ENCODE measurements at regions of chr10 and their contacts with region 1.

Region 1: GRCh38 chr10:79243181-79244067 is 103.8 kb upstream of the PPIF start:
- DNase-seq: peak; percentile 33 to 79
- ATAC-seq: peak; percentile 55 to 73 (median 67)
- H3K4me3 ChIP-seq: peak overlapping the region; percentile 29
- H3K4me3 Mint-ChIP-seq: peak overlapping the region; percentile 87
- H3K27ac ChIP-seq: peak overlapping the region; percentile 73
- H3K27ac Mint-ChIP-seq: peak overlapping the region; percentile 85
- H3K4me1 ChIP-seq: peaks cover 74% of the 10 kb centered on the region
- H3K4me1 Mint-ChIP-seq: peaks cover 59 to 72% of the 10 kb centered on the region in 2 donors
- H3K27me3 ChIP-seq: no peaks in the 10 kb centered on the region
- H3K27me3 Mint-ChIP-seq: no peaks in the 10 kb centered on the region
- CTCF ChIP-seq: no peak

Region 2: GRCh38 chr10:78559661-78560340 is 683.6 kb before region 1 on chr10:
- intact Hi-C with region 1: no loop called
- DNase-seq: no peak
- ATAC-seq: no peak
- H3K4me3 ChIP-seq: no peak overlapping the region
- H3K4me3 Mint-ChIP-seq: no peak overlapping the region
- H3K27ac ChIP-seq: no peak overlapping the region
- H3K27ac Mint-ChIP-seq: no peak overlapping the region
- H3K4me1 ChIP-seq: no peaks in the 10 kb centered on the region
- H3K4me1 Mint-ChIP-seq: no peaks in the 10 kb centered on the region
- H3K27me3 ChIP-seq: no peaks in the 10 kb centered on the region
- H3K27me3 Mint-ChIP-seq: peaks cover 6 to 15% of the 10 kb centered on the region in 2 donors
- CTCF ChIP-seq: no peak

Region 3: DNA sequence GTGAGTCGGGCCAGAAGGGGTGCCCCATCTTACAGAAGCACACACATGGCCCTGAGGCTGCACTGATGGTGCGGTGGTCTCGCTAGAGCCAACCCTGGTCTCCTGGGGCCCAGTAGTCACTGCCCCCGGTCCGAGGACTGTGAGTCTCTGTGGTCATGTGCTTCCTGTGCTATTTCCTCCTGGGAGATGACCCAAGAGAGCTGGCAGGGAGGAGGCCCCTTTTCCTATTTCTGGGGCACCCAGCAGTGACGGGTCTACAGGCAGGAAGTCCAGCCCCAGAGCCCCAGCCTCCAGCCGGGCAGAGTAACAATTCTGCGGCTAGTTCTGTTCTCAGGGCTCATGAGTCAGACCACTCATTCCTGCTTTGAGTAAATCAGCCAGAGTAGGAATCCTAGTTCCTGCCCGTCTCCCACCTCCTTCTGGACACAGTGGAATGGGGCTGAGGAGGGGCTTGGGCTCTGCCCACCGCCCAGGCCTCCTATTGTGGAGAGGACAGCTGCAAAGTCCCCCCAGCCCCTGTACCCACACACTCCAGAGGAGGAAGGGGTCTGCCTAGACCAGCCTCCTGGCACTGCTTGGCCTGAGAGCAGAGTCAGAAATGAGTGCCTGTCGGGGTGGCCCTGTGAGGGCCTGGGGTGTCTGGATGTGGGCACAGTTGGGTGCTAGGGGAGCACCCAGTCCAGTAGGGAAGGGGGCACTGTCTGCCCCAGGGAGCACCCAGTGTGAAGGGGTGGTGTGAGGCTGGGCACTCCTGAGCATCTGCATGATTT is 23.3 kb after region 1 on chr10:
- intact Hi-C with region 1: loop called (anchors 2 kb)
- DNase-seq: peak; percentile 30 to 43
- ATAC-seq: peak; percentile 71 to 82 (median 80)
- H3K4me3 ChIP-seq: no peak overlapping the region
- H3K4me3 Mint-ChIP-seq: peak overlapping the region; percentile 68
- H3K27ac ChIP-seq: peak overlapping the region; percentile 73
- H3K27ac Mint-ChIP-seq: peak overlapping the region; percentile 88 to 95
- H3K4me1 ChIP-seq: peaks cover 85% of the 10 kb centered on the region
- H3K4me1 Mint-ChIP-seq: peaks cover 54 to 89% of the 10 kb centered on the region in 2 donors
- H3K27me3 ChIP-seq: no peaks in the 10 kb centered on the region
- H3K27me3 Mint-ChIP-seq: no peaks in the 10 kb centered on the region
- CTCF ChIP-seq: no peak

Measured in natural killer cell (primary cell).